BJ (cell line): ENCODE measurements at regions of chr1 and their contacts with region 1.

Region 1: DNA sequence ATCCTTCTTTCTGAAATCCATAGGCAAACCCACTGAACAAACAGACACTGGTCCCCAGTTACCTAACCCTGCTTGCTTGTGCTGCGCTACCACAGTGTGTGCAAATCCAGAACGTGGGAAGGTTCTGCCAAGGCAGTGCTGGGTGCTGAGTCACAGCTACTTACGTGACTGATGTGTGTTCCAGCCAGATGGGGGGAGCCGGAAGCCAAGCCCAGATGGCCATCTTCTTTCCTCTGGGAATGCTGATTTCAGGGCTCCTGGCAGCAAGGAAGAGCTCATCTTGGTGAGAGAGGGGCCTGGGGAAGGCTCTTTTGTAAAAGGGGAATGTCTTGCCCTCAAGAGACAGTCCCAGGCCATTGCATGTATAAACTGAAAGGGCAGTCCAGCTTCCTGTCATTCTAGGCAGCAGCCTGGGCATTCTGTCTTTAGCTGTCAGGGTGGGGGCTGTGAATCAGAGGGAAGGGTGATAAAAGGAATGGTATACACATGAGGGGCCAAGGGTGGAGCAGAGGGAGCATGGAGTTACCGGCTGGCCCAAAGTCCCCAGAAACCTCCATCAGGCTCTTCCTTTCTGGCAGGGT is 54.1 kb downstream of the CD46 start:
- DNase-seq: peak; percentile 91
- H3K4me3 ChIP-seq: no peak overlapping the region
- H3K27me3 ChIP-seq: no peaks in the 10 kb centered on the region
- CTCF ChIP-seq: no peak

Region 2: DNA sequence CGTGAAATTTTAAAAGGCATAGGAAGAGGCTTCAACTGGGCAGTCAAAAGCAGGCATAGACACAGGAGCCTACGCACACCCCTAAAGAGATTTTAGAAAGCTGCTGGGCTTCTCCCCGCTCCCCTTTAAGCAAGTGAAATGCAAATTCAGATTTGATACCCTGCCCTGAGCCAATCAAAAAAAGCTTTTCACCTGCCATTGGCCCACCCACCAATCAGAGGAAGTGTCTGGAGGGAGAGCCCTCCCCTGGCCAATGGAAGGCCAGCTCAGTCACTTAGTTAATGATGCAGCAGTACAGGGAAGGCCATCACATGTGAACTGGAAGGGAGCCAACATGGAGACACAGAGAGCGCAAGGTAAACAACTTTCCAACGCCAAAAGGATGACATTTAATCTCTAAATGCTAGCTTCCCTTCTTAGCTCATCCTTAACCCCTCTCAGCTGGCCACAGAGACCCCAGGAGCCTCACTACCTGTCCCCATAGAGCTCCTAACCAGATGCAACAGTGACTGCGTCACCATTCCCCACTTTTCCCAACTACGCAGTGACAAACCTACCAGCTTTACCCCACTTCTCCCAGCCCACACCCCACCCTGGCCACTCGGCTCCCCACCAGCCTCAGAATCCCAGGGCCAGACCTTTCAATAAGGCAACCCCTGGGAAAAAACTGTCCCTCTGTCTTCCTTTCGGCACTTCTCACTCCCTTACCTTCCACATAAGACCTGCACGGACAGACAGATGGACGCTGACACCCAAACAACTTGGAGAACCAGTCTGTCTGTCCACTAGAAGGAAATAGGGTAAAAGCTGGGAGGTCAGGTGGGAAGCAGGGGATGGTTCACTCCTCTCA is 16.9 kb after region 1 on chr1:
- CTCF ChIA-PET with region 1: interaction called, 47 read pairs
- POLR2A ChIA-PET with region 1: no interaction called
- DNase-seq: no peak
- H3K4me3 ChIP-seq: peak overlapping the region; percentile 50
- H3K27me3 ChIP-seq: no peaks in the 10 kb centered on the region
- CTCF ChIP-seq: no peak